OCI-LY7 (cell line): ENCODE measurements at regions of chr4 and their contacts with region 1.

Region 1: DNA sequence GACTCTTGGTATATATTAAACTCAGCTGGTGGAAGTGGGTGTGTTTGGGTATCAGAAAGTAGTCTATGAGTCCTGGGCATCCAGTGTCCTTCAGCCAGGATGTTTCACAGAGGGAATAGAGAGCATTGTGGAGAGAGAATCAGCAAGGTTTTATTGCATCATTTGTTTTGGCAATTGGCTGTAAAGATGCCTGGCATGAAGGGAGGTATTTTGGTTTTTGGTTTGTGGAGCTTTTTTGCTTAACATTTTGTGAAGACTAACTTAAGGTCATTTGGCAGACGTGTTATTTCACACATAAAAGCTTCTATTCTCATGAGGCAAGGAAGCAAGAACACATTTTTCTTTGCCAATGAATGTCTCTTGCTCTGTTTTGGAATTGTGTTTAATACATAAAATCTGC is 71.1 kb downstream of the DCLK2 start:
- DNase-seq: no peak
- H3K4me3 ChIP-seq: no peak overlapping the region
- H3K27ac ChIP-seq: no peak overlapping the region
- H3K4me1 ChIP-seq: no peaks in the 10 kb centered on the region
- CTCF ChIP-seq: no peak

Region 2: DNA sequence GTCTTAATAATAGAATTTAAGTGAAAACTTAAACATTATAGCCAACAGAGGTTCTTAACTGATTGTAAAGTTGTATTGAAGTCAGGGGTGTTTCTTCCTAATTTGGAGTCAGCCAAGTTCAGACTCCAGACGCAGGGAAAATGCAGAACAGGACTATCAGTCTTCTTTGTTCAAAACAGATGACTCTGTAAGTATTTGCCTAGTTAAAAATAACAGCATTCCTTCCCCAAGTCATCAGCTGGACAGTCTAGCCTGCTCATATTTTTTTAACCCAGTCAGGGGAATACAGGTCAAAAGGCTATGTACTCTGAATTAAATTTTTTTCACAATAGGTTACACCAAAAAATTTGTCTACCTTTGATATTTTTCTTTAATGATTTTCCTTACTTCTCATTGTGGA is 144.9 kb before region 1 on chr4:
- CTCF ChIA-PET with region 1: no interaction called
- POLR2A ChIA-PET with region 1: no interaction called
- intact Hi-C with region 1: no loop called
- DNase-seq: no peak
- H3K4me3 ChIP-seq: no peak overlapping the region
- H3K27ac ChIP-seq: no peak overlapping the region
- H3K4me1 ChIP-seq: no peaks in the 10 kb centered on the region
- CTCF ChIP-seq: no peak

Region 3: DNA sequence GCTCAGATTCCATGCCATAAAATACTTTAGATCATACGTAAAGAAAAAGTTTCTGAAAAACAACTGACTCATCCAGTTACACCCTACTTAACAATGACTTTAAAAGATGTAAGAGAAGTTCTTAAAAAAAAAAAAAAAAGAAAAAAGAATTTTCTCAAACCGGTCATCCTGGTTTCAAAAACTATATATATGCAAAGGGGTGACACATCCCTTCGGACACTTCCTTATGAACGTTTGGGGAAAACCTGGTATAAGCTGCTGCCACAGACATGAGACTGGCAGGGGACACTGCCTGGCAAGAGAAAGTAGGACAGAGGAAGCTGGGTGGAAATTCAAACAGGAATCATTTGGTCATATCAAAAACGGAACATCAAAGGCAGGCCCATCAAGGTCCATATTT is 1046.4 kb after region 1 on chr4:
- CTCF ChIA-PET with region 1: no interaction called
- POLR2A ChIA-PET with region 1: interaction called, 10 read pairs
- intact Hi-C with region 1: no loop called
- DNase-seq: no peak
- H3K4me3 ChIP-seq: no peak overlapping the region
- H3K27ac ChIP-seq: no peak overlapping the region
- H3K4me1 ChIP-seq: no peaks in the 10 kb centered on the region
- CTCF ChIP-seq: no peak